Esophagus muscularis mucosa (tissue), 4 donors: ENCODE measurements at regions of chr12 and their contacts with region 1.

Region 1: DNA sequence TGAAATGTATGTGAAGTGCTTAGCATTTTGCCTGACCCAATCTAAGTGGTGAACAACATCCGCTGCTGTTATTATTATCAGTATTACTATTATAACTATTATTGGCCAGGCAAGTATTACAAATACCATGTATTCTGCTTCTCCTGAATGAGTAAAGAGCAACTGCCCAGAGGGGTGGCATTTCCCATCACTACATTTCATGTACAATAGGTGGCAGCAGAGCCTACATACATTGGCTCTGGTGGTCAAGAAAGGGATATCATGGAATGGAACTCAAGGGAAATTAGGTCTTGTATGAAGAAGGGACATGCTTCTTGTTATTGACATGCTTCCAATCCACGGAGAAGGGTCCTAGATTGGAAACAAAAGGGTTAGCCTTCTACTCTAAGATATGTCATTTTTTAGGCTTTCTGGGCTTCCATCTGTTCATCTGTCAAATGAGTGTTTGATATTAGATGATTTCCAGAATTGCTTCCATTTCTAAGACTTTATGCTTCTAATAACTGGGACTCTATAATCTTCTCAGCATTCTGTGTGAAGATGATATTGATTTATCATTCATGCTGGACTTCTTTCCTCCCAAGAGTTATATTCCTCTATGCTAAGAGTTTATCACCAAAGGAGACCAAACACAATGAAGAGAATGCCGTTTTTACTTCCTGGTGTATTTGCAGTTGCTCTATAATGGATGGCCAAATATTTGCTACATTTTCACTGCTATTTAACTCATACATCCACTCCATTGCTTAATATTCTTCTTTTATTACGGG is 239.1 kb downstream of the SSPN start:
- DNase-seq: no peak
- H3K4me3 ChIP-seq: no peak overlapping the region
- H3K27ac ChIP-seq: no peak overlapping the region
- H3K4me1 ChIP-seq: peaks cover 0 to 4% (median 2%) of the 10 kb centered on the region in 4 donors
- H3K27me3 ChIP-seq: no peaks in the 10 kb centered on the region
- CTCF ChIP-seq: peak; percentile 50 to 74 (median 58)
- EP300 ChIP-seq: no peak
- POLR2A ChIP-seq: no peak

Region 2: GRCh38 chr12:26113853-26114719 is 320.4 kb before region 1 on chr12:
- intact Hi-C with region 1: loop called (anchors 10 kb)
- DNase-seq: peak; percentile 98
- H3K4me3 ChIP-seq: peak overlapping the region; percentile 54 to 65 (median 58)
- H3K27ac ChIP-seq: peak overlapping the region; percentile 89 to 97 (median 94)
- H3K4me1 ChIP-seq: peaks cover 27 to 62% (median 57%) of the 10 kb centered on the region in 4 donors
- H3K27me3 ChIP-seq: no peaks in the 10 kb centered on the region
- CTCF ChIP-seq: peak in 2 of 3 experiments; percentile 23 to 41
- EP300 ChIP-seq: no peak
- POLR2A ChIP-seq: peak; percentile 31

Region 3: GRCh38 chr12:26651566-26652188 is 217.2 kb after region 1 on chr12:
- intact Hi-C with region 1: loop called (anchors 10 kb)
- DNase-seq: no peak
- H3K4me3 ChIP-seq: no peak overlapping the region
- H3K27ac ChIP-seq: peak overlapping the region in 3 of 4 donors; percentile 5 to 52 (median 28)
- H3K4me1 ChIP-seq: peaks cover 0 to 33% (median 20%) of the 10 kb centered on the region in 4 donors
- H3K27me3 ChIP-seq: no peaks in the 10 kb centered on the region
- CTCF ChIP-seq: peak; percentile 79 to 84 (median 82)
- EP300 ChIP-seq: no peak
- POLR2A ChIP-seq: no peak